ENCODE measurements at regions of chr20 and their contacts with region 1.

Region 1: DNA sequence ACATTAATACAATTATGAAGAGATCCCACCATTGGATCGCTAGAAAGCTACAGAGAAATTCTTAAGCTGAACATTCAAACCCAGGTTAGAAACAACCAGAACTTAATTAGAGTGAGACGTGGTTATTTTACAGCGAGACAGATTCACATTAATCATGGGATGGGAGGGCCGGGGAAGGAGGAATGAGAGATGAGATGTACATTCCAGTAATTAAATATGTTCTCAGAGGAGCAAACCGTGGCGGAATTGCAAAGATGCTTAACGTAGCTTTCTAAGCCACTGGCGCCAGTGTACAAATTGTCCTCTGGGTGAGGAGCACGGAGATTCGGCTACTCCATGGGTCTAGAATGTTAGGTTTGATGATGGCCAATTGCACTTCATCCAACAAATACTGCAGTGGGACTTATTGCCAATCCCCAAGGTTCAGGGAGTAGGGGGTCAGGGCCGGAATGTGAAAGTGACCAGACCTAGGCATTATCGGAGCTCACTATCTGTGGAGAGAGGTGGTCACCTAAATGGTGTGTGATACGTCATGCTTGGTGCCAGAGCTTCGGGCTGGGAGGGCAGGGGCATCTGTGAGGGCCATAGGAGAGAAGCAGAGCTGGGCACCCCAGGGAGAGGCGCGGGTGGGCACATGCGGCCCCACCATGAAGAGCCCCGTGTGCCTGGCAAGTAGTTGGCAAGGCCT is 114.7 kb downstream of the EDN3 start:
- DNase-seq: peak in 1 of 2 donors; percentile 54
- H3K4me3 ChIP-seq: no peak overlapping the region
- CTCF ChIP-seq: no peak
- POLR2A ChIP-seq: no peak

Region 2: GRCh38 chr20:59385480-59385879 is 29.6 kb before region 1 on chr20:
- intact Hi-C with region 1: loop called (anchors 1 kb)
- DNase-seq: no peak
- H3K4me3 ChIP-seq: no peak overlapping the region
- CTCF ChIP-seq: no peak
- POLR2A ChIP-seq: no peak

Region 3: DNA sequence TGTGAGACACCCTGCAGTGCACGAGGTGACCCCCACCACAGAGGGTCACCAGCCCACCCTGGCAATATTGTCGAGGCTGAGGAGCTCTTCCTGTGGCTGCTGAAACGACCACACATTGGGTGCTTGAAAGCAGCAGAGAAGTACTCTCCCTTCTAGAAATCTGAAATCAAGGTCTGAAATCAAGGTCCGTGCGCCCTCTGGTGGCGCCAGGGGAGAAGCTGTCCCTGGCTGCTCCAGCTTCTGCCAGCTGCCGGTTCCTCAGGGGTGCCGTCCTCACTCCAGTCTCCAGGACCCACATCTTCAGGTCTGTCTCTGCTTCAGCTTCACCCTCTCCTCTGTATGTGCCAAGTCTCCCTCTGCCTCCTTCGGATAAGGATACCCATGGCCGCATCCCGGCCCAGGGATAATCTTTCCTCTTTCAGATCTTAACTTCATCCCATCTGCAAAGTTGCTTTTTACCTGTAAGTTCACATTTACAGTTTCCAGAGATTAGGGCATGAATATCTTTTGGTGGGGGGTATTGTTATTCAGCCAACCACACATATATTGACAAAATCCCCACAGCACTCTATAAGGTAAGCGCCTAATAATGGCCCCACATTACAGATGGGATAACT is 80.9 kb after region 1 on chr20:
- intact Hi-C with region 1: no loop called
- DNase-seq: peak; percentile 46 to 90
- H3K4me3 ChIP-seq: no peak overlapping the region
- CTCF ChIP-seq: no peak
- POLR2A ChIP-seq: no peak